Activated CD4-positive, alpha-beta T cell treated with anti-CD3 and anti-CD28 coated beads, Interleukin-2, amount 10 ng/mL, durations not matched to agents 24 days and 14 days (primary cell): ENCODE measurements at regions of chr2 and their contacts with region 1.

Region 1: GRCh38 chr2:96145036-96145847 is at the start of gene DUSP2:
- DNase-seq: peak; percentile 97
- H3K4me3 Mint-ChIP-seq: peak within 1 kb of the TSS; percentile 98
- H3K27ac Mint-ChIP-seq: peak within 1 kb of the TSS; percentile 95
- H3K4me1 Mint-ChIP-seq: peaks cover 52% of the 10 kb centered on the region
- H3K27me3 Mint-ChIP-seq: no peaks in the 10 kb centered on the region
- total RNA-seq, gene DUSP2: 436 and 445 TPM in 2 replicates

Region 2: DNA sequence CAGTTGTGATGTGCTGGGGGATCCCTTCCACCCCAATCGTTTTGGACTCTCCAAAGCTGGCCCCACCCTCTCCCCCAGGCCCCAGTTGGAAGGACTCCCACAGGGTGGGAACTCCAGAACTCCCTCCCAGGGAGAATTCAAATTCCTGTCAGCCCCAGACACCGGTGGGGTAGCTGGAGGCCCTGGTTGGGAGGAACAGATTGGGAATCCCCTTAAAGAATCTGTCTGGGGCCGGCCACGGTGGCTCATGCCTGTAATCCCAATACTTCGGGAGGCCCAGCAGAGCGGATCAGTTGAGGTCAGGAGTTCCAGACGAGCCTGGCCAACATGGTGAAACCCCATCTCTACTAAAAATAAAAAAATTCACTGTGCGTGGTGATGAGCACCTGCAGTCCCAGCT is 309.1 kb before region 1 on chr2:
- intact Hi-C with region 1: no loop called
- DNase-seq: no peak
- H3K4me3 Mint-ChIP-seq: no peak overlapping the region
- H3K27ac Mint-ChIP-seq: no peak overlapping the region
- H3K4me1 Mint-ChIP-seq: no peaks in the 10 kb centered on the region
- H3K27me3 Mint-ChIP-seq: no peaks in the 10 kb centered on the region

Region 3: GRCh38 chr2:96116879-96117697 is 28.2 kb before region 1 on chr2:
- intact Hi-C with region 1: loop called (anchors 1 kb)
- DNase-seq: peak; percentile 92
- H3K4me3 Mint-ChIP-seq: peak overlapping the region; percentile 77
- H3K27ac Mint-ChIP-seq: no peak overlapping the region
- H3K4me1 Mint-ChIP-seq: peaks cover 22% of the 10 kb centered on the region
- H3K27me3 Mint-ChIP-seq: peaks cover 42% of the 10 kb centered on the region

Region 4: DNA sequence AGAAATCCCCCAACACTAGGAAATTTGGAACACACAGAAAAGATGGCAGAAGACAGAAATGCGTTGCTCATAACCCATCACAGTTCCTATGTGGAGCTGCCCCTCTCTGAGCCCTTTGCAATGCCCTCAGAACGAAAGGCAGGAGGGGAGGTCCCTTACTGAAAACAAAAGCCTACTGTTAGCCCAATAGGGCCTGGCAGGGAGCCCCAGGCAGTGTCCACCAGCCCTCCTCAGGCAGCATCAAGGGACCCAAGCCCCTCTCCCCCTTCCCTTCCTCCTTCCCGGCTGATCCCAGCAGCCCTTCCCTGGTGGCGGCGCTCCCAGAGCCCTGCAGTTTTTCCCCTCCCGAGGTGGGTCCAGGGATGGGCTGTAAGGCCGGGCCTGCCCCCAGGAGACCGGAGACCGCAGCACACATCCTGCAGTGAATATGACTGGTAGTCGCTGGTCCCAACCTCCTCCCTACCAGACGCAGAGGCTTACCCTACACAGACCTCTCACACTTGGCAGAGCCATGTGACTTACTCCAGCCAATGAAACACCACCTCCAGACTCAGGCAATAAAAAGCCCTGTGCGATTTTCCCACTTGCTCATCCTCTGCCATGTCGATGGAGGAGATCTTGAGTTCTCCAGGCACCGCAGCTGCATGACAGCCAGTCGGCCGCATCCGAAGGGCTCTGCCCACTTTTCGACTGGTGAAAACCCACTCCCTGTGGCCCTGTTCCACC is 19.4 kb after region 1 on chr2:
- intact Hi-C with region 1: loop called (anchors 1 kb)
- DNase-seq: peak; percentile 88
- H3K4me3 Mint-ChIP-seq: peak overlapping the region; percentile 86
- H3K27ac Mint-ChIP-seq: peak overlapping the region; percentile 99
- H3K4me1 Mint-ChIP-seq: peaks cover 52% of the 10 kb centered on the region
- H3K27me3 Mint-ChIP-seq: no peaks in the 10 kb centered on the region

Region 5: GRCh38 chr2:96218508-96219131 is 73.4 kb after region 1 on chr2:
- intact Hi-C with region 1: no loop called
- DNase-seq: no peak
- H3K4me3 Mint-ChIP-seq: no peak overlapping the region
- H3K27ac Mint-ChIP-seq: no peak overlapping the region
- H3K4me1 Mint-ChIP-seq: no peaks in the 10 kb centered on the region
- H3K27me3 Mint-ChIP-seq: no peaks in the 10 kb centered on the region

Region 6: GRCh38 chr2:96265840-96266679 is 120.8 kb after region 1 on chr2 and contains the starts of genes CIAO1 and TMEM127:
- intact Hi-C with region 1: loop called (anchors 1 kb)
- DNase-seq: peak; percentile 100
- H3K4me3 Mint-ChIP-seq: peak within 1 kb of the TSS; percentile 99
- H3K27ac Mint-ChIP-seq: peak within 1 kb of the TSS; percentile 98
- H3K4me1 Mint-ChIP-seq: peaks cover 38% of the 10 kb centered on the region
- H3K27me3 Mint-ChIP-seq: no peaks in the 10 kb centered on the region
- total RNA-seq, gene CIAO1: 105 and 110 TPM in 2 replicates
- total RNA-seq, gene TMEM127: 31.6 and 33.1 TPM in 2 replicates

Region 7: GRCh38 chr2:96330407-96330806 is 185.2 kb after region 1 on chr2:
- intact Hi-C with region 1: loop called (anchors 1 kb)
- DNase-seq: no peak
- H3K4me3 Mint-ChIP-seq: no peak overlapping the region
- H3K27ac Mint-ChIP-seq: no peak overlapping the region
- H3K4me1 Mint-ChIP-seq: peaks cover 50% of the 10 kb centered on the region
- H3K27me3 Mint-ChIP-seq: no peaks in the 10 kb centered on the region

Region 8: DNA sequence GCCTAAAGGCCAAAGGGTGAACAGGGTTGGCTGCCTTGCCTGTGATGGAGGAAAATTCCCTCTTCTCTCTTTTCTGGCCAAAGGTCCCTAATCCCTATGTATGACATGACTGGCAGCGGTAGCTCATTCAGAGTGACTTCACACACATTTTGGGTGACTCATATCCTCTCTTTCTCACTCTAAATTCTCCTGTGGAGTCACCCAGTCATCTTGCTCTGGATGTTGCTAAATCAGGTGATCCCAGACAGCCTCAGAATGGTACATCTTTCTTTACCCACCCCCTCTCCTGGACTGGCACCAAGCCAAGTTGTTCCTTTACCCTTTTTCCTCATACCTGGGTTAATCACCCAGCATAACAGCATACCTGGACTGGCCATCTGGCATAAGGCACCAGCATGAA is 282.7 kb after region 1 on chr2:
- intact Hi-C with region 1: no loop called
- DNase-seq: no peak
- H3K4me3 Mint-ChIP-seq: no peak overlapping the region
- H3K27ac Mint-ChIP-seq: peak overlapping the region; percentile 39
- H3K4me1 Mint-ChIP-seq: peaks cover 9% of the 10 kb centered on the region
- H3K27me3 Mint-ChIP-seq: peaks cover 4% of the 10 kb centered on the region